Cardiac septum (tissue), 1 donor: ENCODE measurements at regions of chrX and their contacts with region 1.

Region 1: GRCh38 chrX:151753313-151754041 is 18.9 kb downstream of the CNGA2 start:
- DNase-seq: no peak

Region 2: DNA sequence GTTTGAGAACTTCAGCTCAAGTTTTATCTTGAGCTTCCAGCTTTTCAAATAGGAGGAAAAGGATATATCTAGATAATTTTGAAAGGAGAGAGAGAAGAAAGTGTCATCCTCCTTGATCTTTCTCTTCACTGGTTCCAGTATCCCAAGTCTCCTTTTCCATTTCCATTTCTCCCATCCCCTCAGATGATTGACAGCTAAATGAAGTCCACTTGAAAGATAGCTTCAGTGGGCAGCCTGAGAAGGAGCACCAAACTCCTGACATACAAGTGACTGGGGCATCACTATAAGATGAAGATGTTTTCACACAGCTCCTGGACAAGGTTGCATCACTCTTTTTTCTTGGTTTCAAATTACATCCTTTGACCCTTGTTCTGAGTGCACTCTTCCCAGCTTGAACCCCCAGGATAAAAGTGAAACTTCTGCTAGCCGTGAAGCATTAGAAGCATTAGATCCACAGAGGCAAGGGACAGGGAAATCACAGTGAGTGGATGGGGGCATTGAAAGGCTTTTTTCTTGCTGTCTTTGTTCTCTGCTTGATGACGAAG is 402.4 kb after region 1 on chrX:
- intact Hi-C with region 1: no loop called
- DNase-seq: no peak

Region 3: DNA sequence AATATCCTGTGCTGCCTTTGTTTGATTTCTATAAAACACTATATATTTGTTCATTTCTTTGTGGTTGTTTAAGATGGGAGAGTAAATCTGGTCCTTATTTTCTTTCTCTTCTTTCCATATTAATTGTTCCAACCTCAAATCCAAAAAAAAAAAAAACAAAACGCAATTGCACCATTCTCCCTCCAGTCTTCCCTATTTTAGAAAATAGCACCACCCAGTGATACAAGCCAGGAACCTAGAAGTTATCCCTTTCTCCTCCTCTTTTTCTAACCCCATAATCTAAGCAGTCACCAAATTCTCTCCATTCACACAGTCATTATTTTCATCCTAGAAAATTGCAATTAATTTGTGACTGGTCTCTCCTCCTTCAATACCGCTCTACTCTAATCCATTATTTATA is 589.8 kb after region 1 on chrX:
- intact Hi-C with region 1: loop called (anchors 10 kb)
- DNase-seq: no peak

Region 4: GRCh38 chrX:152632445-152633097 is 879.1 kb after region 1 on chrX:
- intact Hi-C with region 1: loop called (anchors 2 kb)
- DNase-seq: no peak